Sciatic nerve (tissue), 2 donors: ENCODE measurements at regions of chr6 and their contacts with region 1.

Region 1: DNA sequence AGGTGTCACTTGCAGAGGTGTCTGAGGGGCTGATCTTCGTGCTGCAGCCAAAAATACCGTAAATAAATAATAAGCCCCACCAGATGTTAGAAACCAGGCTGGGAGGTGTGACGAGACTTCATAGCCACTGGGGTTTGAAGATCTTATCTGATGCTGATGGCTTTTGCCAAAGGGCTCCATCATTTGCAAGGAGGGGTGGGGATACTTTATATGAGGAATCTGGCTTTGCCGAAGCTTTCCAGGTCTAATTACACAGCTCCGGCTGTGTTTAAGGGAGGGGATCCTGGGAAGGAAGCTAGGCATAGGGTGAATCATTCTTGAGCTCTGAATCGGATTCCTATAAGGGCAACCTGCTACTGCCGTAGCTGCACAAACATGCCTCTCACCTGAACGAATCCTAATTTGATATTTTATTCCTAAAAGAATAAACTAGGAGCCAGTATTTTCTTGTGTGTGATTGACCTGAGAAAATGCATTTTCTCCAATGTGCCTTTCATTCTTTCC is 249.6 kb downstream of the SOD2 start:
- DNase-seq: no peak
- ATAC-seq: no peak

Region 2: GRCh38 chr6:159279790-159280277 is 163.6 kb before region 1 on chr6:
- intact Hi-C with region 1: no loop called
- DNase-seq: no peak
- ATAC-seq: no peak

Region 3: GRCh38 chr6:159416891-159417560 is 26.4 kb before region 1 on chr6:
- intact Hi-C with region 1: loop called (anchors 1 kb)
- DNase-seq: no peak
- ATAC-seq: no peak